Activated B cell treated with CpG ODN at 0.5 μM for 24 hours (primary cell): ENCODE measurements at regions of chr7 and their contacts with region 1.

Region 1: GRCh38 chr7:76225379-76225778 is 23.7 kb downstream of the SRRM3 start:
- DNase-seq: no peak
- ATAC-seq: no peak
- H3K4me3 Mint-ChIP-seq: no peak overlapping the region
- H3K27ac Mint-ChIP-seq: no peak overlapping the region
- H3K4me1 Mint-ChIP-seq: no peaks in the 10 kb centered on the region
- H3K27me3 Mint-ChIP-seq: peaks cover 31% of the 10 kb centered on the region
- CTCF ChIP-seq: no peak

Region 2: GRCh38 chr7:76201730-76202665 is 23.4 kb before region 1 on chr7 and contains the start of gene SRRM3:
- CTCF ChIA-PET with region 1: no interaction called
- POLR2A ChIA-PET with region 1: no interaction called
- intact Hi-C with region 1: loop called (anchors 1 kb)
- DNase-seq: peak; percentile 81
- ATAC-seq: peak; percentile 96
- H3K4me3 Mint-ChIP-seq: no peak within 1 kb of the TSS
- H3K27ac Mint-ChIP-seq: no peak within 1 kb of the TSS
- H3K4me1 Mint-ChIP-seq: no peaks in the 10 kb centered on the region
- H3K27me3 Mint-ChIP-seq: peaks cover 41% of the 10 kb centered on the region
- CTCF ChIP-seq: no peak
- total RNA-seq, gene SRRM3: not detected in 2 replicates